Activated naive CD4-positive, alpha-beta T cell treated with anti-CD3 and anti-CD28 coated beads for 36 hours (primary cell): ENCODE measurements at regions of chrX and their contacts with region 1.

Region 1: DNA sequence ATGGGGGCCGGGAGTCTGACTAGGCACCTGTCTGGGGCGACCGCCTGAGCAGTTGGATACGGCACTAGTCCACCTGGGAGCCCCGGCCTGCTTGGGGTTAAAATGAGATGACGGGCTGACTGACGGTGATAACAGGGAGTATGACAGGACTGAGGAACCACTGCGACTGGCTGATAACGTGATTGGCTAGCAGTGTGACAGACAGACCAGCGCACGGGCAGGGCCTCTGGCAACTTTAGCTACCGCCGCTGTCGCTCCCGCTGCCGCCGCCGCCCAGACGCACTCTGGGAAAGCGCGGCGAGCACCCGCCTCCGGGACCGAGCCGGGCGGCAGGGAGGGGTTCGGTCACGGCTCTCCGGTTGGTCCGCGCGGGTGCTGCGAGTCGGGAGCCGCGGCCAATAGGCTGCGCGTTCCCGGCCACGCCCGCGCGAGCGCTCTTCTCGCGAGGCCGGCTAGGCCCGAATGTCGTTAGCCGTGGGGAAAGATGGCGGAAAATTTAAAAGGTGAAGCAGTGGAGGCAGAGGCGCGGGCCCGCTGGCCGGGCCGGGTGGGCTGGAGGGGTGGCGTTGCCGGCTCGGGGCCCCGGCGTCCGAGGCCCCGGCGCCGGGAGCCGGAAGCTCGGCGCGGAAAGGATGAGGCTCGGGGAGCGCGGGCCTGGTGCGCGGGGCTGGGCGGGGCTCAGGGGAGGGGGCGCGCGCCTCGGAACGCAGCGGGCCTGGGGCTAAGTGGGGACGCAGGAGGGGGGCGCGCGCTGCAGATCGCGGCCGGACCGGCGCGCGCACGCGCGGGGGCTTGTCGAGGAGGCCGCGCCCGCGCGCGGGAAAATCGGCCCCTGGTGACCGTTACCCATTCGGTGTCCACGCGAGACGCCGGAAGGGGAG is at the start of gene SUV39H1:
- DNase-seq: peak; percentile 87
- H3K4me3 Mint-ChIP-seq: peak within 1 kb of the TSS; percentile 89
- H3K27ac Mint-ChIP-seq: peak within 1 kb of the TSS; percentile 91
- H3K4me1 Mint-ChIP-seq: peaks cover 36% of the 10 kb centered on the region
- H3K27me3 Mint-ChIP-seq: no peaks in the 10 kb centered on the region
- total RNA-seq, gene SUV39H1: 31.5 to 31.9 TPM

Region 2: DNA sequence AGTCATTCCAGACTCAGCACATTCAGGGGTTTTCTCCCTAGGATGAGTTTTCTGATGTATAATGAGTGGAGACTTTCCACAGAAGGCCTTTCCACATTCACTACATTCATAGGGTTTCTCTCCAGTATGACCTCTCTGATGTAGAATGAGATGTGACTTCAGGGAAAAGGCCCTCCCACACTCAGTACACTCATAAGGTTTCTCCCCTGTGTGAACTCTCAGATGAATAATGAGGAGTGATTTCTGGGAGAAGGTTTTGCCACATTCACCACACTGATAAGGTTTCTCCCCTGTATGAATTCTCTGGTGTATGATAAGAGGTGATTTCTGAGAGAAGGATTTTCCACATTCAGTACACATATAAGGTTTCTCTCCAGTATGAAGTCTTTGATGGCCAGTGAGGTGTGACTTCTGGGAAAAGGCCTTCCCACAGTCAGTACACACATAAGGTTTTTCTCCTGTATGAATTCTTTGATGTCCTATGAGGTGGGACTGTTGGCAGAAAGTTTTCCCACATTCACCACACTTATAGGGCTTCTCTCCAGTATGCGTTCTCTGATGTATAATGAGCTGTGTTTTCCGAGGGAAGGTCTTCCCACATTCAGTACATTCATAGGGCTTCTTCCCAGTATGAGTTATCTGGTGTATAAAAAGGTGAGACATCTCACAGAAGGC is 637.8 kb before region 1 on chrX:
- CTCF ChIA-PET with region 1: no interaction called
- intact Hi-C with region 1: no loop called
- DNase-seq: no peak
- H3K4me3 Mint-ChIP-seq: no peak overlapping the region
- H3K27ac Mint-ChIP-seq: no peak overlapping the region
- H3K4me1 Mint-ChIP-seq: no peaks in the 10 kb centered on the region
- H3K27me3 Mint-ChIP-seq: no peaks in the 10 kb centered on the region

Region 3: GRCh38 chrX:48676106-48676892 is 20.2 kb before region 1 on chrX:
- CTCF ChIA-PET with region 1: no interaction called
- intact Hi-C with region 1: loop called (anchors 1 kb)
- DNase-seq: peak; percentile 90
- H3K4me3 Mint-ChIP-seq: peak overlapping the region; percentile 90
- H3K27ac Mint-ChIP-seq: peak overlapping the region; percentile 91
- H3K4me1 Mint-ChIP-seq: peaks cover 25% of the 10 kb centered on the region
- H3K27me3 Mint-ChIP-seq: no peaks in the 10 kb centered on the region

Region 4: GRCh38 chrX:48713847-48714246 is 17.3 kb after region 1 on chrX:
- CTCF ChIA-PET with region 1: no interaction called
- intact Hi-C with region 1: loop called (anchors 1 kb)
- DNase-seq: peak; percentile 10
- H3K4me3 Mint-ChIP-seq: peak overlapping the region; percentile 3
- H3K27ac Mint-ChIP-seq: peak overlapping the region; percentile 69
- H3K4me1 Mint-ChIP-seq: peaks cover 77% of the 10 kb centered on the region
- H3K27me3 Mint-ChIP-seq: no peaks in the 10 kb centered on the region

Region 5: DNA sequence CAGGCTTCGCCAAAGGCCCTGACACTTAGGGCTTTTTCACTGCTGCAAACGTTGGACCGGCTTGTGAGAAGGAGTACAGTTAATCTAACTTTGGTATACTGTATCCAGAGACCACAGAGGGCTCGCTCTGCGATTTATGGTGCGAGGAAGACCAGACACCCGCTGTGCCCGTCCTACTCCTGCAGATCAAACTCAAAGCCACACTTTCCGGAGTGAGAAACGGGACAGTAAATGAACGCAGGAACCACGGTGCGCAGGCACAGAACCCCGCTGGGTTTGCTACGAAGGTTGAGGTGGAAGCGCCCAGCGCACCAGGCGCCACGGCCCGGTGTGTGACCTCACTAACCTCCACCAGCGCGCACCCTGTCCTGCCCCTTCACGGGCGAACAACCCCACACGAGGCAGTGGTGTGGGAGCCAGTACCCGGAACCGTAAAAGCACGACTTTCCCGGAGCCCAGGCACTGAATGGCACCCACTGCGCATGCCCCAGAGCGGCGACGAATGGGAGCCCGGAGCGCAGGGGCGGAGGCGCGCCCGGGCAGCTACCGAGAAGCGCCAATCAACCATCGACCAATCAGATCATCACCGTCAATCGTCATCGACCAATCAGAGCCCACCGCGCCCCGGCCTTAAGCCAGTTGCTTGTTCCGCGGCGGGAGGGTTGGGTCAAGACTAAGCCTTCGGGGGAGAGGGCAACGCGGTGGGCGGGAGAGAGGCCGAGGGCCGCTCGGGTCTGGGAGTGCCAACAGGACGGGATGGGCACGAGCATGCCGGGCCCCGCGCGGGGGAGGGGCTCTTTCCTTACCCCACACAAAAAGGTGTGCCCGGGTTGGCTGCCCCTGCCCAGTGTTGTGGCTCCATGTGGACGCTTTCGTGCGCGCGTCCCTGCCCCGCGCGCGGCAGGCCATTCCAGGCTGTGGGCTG is 404.4 kb after region 1 on chrX:
- CTCF ChIA-PET with region 1: no interaction called
- intact Hi-C with region 1: loop called (anchors 5 kb)
- DNase-seq: peak; percentile 90
- H3K4me3 Mint-ChIP-seq: peak overlapping the region; percentile 90
- H3K27ac Mint-ChIP-seq: peak overlapping the region; percentile 89
- H3K4me1 Mint-ChIP-seq: peaks cover 8% of the 10 kb centered on the region
- H3K27me3 Mint-ChIP-seq: no peaks in the 10 kb centered on the region